Psoas muscle (tissue), 8 donors: ENCODE measurements at regions of chr22 and their contacts with region 1.

Region 1: DNA sequence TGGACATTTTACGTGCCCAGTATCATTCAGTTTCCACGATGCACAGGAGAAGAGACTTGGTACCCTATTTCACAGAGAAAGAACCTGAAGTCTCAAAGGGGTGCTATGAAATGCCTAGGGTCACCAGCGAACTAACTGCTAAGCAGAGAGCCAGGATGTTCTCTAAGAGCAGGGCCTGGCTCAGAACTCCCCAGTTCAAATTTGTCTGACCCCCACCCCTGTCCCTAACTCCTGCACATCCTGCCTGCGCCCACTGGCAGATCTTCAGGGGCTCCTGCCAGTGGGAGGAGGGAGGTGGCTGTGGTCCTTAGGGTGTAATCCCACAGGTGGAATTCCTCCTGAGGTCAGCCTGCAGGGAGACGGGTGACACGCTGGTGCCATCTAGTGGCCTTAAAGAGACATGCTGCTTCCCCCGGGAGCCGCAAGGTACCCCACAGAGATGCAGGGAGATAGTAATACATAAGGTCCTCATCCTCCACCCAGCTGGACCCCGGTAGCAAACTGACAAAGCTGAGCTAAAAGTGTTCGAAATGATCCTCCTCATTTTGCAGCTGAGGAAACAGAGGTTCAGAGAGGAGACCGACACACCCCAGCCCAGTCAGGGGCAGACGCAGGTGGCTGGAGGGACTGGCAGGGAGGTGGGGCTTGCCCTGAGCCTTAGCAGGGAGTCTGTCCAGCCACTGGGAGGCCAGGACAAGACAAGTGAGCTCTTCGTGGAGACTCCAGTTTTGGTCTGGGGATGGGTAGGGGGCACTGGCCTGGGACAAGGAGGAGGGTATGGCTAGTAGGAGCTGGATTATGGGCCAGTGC is 34.1 kb downstream of the MB start:
- DNase-seq: peak; percentile 56 to 77
- ATAC-seq: peak; percentile 43 to 62 (median 53)
- H3K4me3 ChIP-seq: no peak overlapping the region
- H3K27ac ChIP-seq: no peak overlapping the region
- H3K4me1 ChIP-seq: peaks cover 12% of the 10 kb centered on the region
- H3K27me3 ChIP-seq: no peaks in the 10 kb centered on the region
- CTCF ChIP-seq: peak; percentile 95

Region 2: GRCh38 chr22:35350539-35351503 is 232.2 kb before region 1 on chr22:
- intact Hi-C with region 1: loop called (anchors 2 kb)
- DNase-seq: peak; percentile 92 to 97
- ATAC-seq: peak; percentile 90 to 93 (median 92)
- H3K4me3 ChIP-seq: peak overlapping the region; percentile 71
- H3K27ac ChIP-seq: peak overlapping the region; percentile 80
- H3K4me1 ChIP-seq: peaks cover 16% of the 10 kb centered on the region
- H3K27me3 ChIP-seq: no peaks in the 10 kb centered on the region
- CTCF ChIP-seq: peak; percentile 92

Region 3: GRCh38 chr22:35361001-35361558 is 222.0 kb before region 1 on chr22:
- intact Hi-C with region 1: no loop called
- DNase-seq: no peak
- ATAC-seq: no peak
- H3K4me3 ChIP-seq: no peak overlapping the region
- H3K27ac ChIP-seq: no peak overlapping the region
- H3K4me1 ChIP-seq: no peaks in the 10 kb centered on the region
- H3K27me3 ChIP-seq: no peaks in the 10 kb centered on the region
- CTCF ChIP-seq: no peak

Region 4: DNA sequence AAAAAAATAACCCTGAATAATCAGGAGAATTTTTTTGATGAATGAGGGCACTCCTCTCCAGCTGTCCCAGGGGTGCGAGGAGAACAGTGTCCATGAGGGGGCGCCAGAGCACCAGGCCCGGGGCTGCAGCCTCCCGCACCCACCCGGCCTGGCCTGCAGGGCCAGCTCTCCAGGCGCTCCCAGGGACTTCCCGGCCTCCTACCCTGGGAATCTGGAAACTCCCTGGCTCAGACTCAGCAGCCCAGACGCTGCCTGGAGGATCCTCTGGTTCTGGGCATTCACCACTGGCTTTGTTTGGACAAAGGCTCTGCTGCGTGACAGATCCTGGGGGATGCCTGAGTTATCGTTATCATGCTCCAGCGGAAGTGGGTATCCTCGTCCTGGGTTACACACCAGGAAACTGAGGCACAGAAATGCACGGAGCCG is 152.2 kb before region 1 on chr22:
- intact Hi-C with region 1: loop called (anchors 1 to 2 kb)
- DNase-seq: peak; percentile 88 to 92
- ATAC-seq: peak; percentile 95 to 98 (median 96)
- H3K4me3 ChIP-seq: no peak overlapping the region
- H3K27ac ChIP-seq: no peak overlapping the region
- H3K4me1 ChIP-seq: peaks cover 24% of the 10 kb centered on the region
- H3K27me3 ChIP-seq: no peaks in the 10 kb centered on the region
- CTCF ChIP-seq: peak; percentile 96

Region 5: GRCh38 chr22:35622191-35622913 is 39.3 kb after region 1 on chr22:
- intact Hi-C with region 1: loop called (anchors 2 kb)
- DNase-seq: peak; percentile 79 to 90
- ATAC-seq: peak; percentile 77 to 84 (median 79)
- H3K4me3 ChIP-seq: peak overlapping the region; percentile 58
- H3K27ac ChIP-seq: peak overlapping the region; percentile 93
- H3K4me1 ChIP-seq: peaks cover 51% of the 10 kb centered on the region
- H3K27me3 ChIP-seq: no peaks in the 10 kb centered on the region
- CTCF ChIP-seq: no peak